ENCODE measurements at regions of chr2 and their contacts with region 1.

Region 1: DNA sequence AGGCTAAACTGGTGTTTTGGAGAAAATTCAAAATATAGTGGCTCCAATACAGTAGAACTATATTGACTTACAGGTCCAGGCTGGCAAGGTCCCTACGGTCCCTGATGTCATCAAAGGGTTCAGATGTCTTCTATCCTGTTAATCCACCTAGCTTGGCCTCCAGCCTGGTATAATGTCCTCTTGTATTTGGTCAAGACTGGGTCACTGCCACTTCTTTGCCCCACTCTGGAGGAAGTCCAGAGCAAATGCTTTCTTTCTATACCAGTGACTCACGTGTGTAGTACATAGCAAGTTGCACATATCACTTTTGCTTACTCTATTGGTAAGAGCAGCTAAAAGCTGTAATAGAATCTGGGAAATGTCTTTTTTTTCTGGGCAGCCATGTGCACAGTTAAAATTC is 80.8 kb downstream of the LCLAT1 start:
- DNase-seq: no peak
- ATAC-seq: no peak
- H3K4me3 ChIP-seq: no peak overlapping the region
- H3K4me3 Mint-ChIP-seq: no peak overlapping the region
- H3K27ac ChIP-seq: no peak overlapping the region
- H3K27ac Mint-ChIP-seq: no peak overlapping the region
- H3K4me1 ChIP-seq: no peaks in the 10 kb centered on the region
- H3K4me1 Mint-ChIP-seq: peaks cover 1% of the 10 kb centered on the region
- H3K27me3 ChIP-seq: no peaks in the 10 kb centered on the region
- H3K27me3 Mint-ChIP-seq: no peaks in the 10 kb centered on the region
- CTCF ChIP-seq: no peak

Region 2: GRCh38 chr2:29309090-29310029 is 1218.5 kb before region 1 on chr2:
- CTCF ChIA-PET with region 1: no interaction called
- POLR2A ChIA-PET with region 1: no interaction called
- intact Hi-C with region 1: no loop called
- DNase-seq: peak; percentile 43
- ATAC-seq: no peak
- H3K4me3 ChIP-seq: no peak overlapping the region
- H3K4me3 Mint-ChIP-seq: no peak overlapping the region
- H3K27ac ChIP-seq: no peak overlapping the region
- H3K27ac Mint-ChIP-seq: no peak overlapping the region
- H3K4me1 ChIP-seq: peaks cover 0 to 4% of the 10 kb centered on the region in 2 donors
- H3K4me1 Mint-ChIP-seq: peaks cover 2% of the 10 kb centered on the region
- H3K27me3 ChIP-seq: peaks cover 0 to 7% (median 3%) of the 10 kb centered on the region in 4 experiments
- H3K27me3 Mint-ChIP-seq: peaks cover 24% of the 10 kb centered on the region
- CTCF ChIP-seq: peak; percentile 76

Region 3: GRCh38 chr2:30487603-30488002 is 40.3 kb before region 1 on chr2:
- CTCF ChIA-PET with region 1: no interaction called
- POLR2A ChIA-PET with region 1: no interaction called
- intact Hi-C with region 1: loop called (anchors 5 kb)
- DNase-seq: no peak
- ATAC-seq: no peak
- H3K4me3 ChIP-seq: no peak overlapping the region
- H3K4me3 Mint-ChIP-seq: no peak overlapping the region
- H3K27ac ChIP-seq: no peak overlapping the region
- H3K27ac Mint-ChIP-seq: no peak overlapping the region
- H3K4me1 ChIP-seq: peaks cover 5 to 28% of the 10 kb centered on the region in 2 donors
- H3K4me1 Mint-ChIP-seq: peaks cover 49% of the 10 kb centered on the region
- H3K27me3 ChIP-seq: no peaks in the 10 kb centered on the region
- H3K27me3 Mint-ChIP-seq: no peaks in the 10 kb centered on the region
- CTCF ChIP-seq: no peak

Region 4: GRCh38 chr2:30565851-30566358 is 38.0 kb after region 1 on chr2:
- CTCF ChIA-PET with region 1: no interaction called
- POLR2A ChIA-PET with region 1: no interaction called
- intact Hi-C with region 1: loop called (anchors 5 kb)
- DNase-seq: no peak
- ATAC-seq: no peak
- H3K4me3 ChIP-seq: no peak overlapping the region
- H3K4me3 Mint-ChIP-seq: no peak overlapping the region
- H3K27ac ChIP-seq: no peak overlapping the region
- H3K27ac Mint-ChIP-seq: no peak overlapping the region
- H3K4me1 ChIP-seq: no peaks in the 10 kb centered on the region
- H3K4me1 Mint-ChIP-seq: no peaks in the 10 kb centered on the region
- H3K27me3 ChIP-seq: no peaks in the 10 kb centered on the region
- H3K27me3 Mint-ChIP-seq: no peaks in the 10 kb centered on the region
- CTCF ChIP-seq: no peak

Region 5: DNA sequence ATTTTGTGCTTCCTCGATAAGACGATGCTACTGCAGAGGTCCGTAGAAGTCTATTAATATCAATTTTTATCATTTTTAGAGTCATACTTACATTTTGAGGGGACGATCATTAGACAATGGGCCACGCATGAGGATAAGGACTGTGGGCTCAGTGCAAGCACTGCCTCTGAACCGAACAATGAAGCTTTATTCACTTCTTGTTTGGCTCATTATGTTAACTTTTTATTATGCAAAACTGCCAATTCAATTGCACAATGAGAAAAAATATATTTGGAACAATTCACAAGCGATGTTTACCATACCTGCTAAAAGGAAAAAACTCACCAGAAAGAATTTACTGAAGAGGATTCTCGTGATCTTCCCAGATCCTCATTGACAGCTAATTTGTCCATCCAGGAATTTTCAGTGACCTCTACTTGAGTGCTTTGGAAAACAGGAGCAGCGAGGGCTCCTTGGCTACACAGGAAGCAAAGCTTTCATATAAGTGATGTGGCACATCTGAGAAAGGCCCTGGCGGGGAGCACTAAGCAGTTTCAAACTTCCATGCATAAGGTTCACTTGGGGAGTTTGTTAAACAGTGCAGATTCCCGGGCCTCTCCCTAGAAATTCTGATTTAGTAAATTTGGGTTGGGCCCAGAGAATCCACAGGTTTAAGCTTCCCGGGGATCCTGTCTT is 292.7 kb after region 1 on chr2:
- CTCF ChIA-PET with region 1: no interaction called
- POLR2A ChIA-PET with region 1: no interaction called
- intact Hi-C with region 1: no loop called
- DNase-seq: no peak
- ATAC-seq: no peak
- H3K4me3 ChIP-seq: no peak overlapping the region
- H3K4me3 Mint-ChIP-seq: no peak overlapping the region
- H3K27ac ChIP-seq: no peak overlapping the region
- H3K27ac Mint-ChIP-seq: no peak overlapping the region
- H3K4me1 ChIP-seq: no peaks in the 10 kb centered on the region
- H3K4me1 Mint-ChIP-seq: no peaks in the 10 kb centered on the region
- H3K27me3 ChIP-seq: no peaks in the 10 kb centered on the region
- H3K27me3 Mint-ChIP-seq: peaks cover 10% of the 10 kb centered on the region
- CTCF ChIP-seq: no peak